K562 (cell line): ENCODE measurements at regions of chr15 and their contacts with region 1.

Region 1: GRCh38 chr15:68304589-68305337 is 27.2 kb downstream of the FEM1B start:
- DNase-seq: no peak
- ATAC-seq: peak; percentile 51
- H3K4me3 ChIP-seq: no peak overlapping the region
- H3K27ac ChIP-seq: no peak overlapping the region
- H3K4me1 ChIP-seq: peaks cover 0 to 6% of the 10 kb centered on the region in 2 experiments; a peak in 2 of 5 replicates
- H3K27me3 ChIP-seq: peaks cover 9 to 17% of the 10 kb centered on the region in 2 experiments; a peak in 4 of 5 replicates
- CTCF ChIP-seq: peak in 1 of 3 experiments; percentile 7; a peak in 1 of 6 replicates
- EP300 ChIP-seq: no peak
- POLR2A ChIP-seq: no peak
- RAD21 ChIP-seq: no peak

Region 2: DNA sequence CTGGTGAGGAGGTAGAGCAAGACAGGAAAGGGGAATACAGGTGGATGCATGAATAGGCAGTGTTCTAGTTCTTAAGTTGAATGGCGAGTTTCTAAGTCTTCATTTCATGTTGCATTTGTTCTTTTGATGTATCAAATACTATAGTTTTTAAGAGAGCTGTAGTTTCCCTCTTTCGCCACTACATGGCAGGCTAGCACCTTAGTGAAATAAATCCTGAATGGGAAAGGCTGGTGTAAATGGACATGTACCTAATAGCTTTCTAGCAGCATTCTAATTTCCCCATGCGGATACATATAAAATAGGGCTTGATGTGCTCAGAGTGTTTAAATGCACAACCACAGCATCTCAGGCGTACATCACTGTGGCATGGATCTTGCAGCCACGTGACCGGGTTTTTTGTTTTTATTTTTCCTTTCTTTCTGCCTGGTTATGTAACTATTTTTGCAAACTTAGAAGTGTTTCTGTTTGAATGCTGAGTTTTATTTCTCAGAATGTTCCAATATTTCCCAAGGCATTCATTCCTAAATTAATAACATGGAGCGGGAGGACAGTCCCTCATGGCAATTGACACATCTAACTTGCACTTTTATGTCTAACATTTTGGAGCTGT is 51.7 kb before region 1 on chr15:
- CTCF ChIA-PET with region 1: interaction called, 28 read pairs
- POLR2A ChIA-PET with region 1: no interaction called
- in situ Hi-C with region 1: loop called (anchors 5 kb)
- intact Hi-C with region 1: loop called (anchors 1 kb)
- DNase-seq: peak; percentile 43 to 77 (median 55)
- ATAC-seq: peak; percentile 90
- H3K4me3 ChIP-seq: no peak overlapping the region
- H3K27ac ChIP-seq: no peak overlapping the region
- H3K4me1 ChIP-seq: peaks cover 0 to 12% of the 10 kb centered on the region in 2 experiments; a peak in 3 of 5 replicates
- H3K27me3 ChIP-seq: peaks cover 12 to 19% of the 10 kb centered on the region in 2 experiments
- CTCF ChIP-seq: peak; percentile 74 to 93 (median 81)
- EP300 ChIP-seq: no peak
- POLR2A ChIP-seq: no peak
- RAD21 ChIP-seq: peak; percentile 73 to 87

Region 3: GRCh38 chr15:68383161-68384074 is 78.7 kb after region 1 on chr15:
- CTCF ChIA-PET with region 1: interaction called, 4 read pairs
- POLR2A ChIA-PET with region 1: no interaction called
- in situ Hi-C with region 1: no loop called
- intact Hi-C with region 1: loop called (anchors 1 kb)
- DNase-seq: peak; percentile 53 to 74 (median 66)
- ATAC-seq: peak; percentile 61; the same call in 1 of the 3 replicates
- H3K4me3 ChIP-seq: no peak overlapping the region
- H3K27ac ChIP-seq: no peak overlapping the region
- H3K4me1 ChIP-seq: no peaks in the 10 kb centered on the region
- H3K27me3 ChIP-seq: peaks cover 0 to 29% of the 10 kb centered on the region in 2 experiments; a peak in 3 of 5 replicates
- CTCF ChIP-seq: peak; percentile 60 to 70 (median 63)
- EP300 ChIP-seq: no peak
- POLR2A ChIP-seq: no peak
- RAD21 ChIP-seq: peak; percentile 36 to 64

Region 4: GRCh38 chr15:68536331-68537095 is 231.8 kb after region 1 on chr15:
- CTCF ChIA-PET with region 1: interaction called, 18 read pairs
- POLR2A ChIA-PET with region 1: no interaction called
- in situ Hi-C with region 1: no loop called
- intact Hi-C with region 1: loop called (anchors 1 kb)
- DNase-seq: no peak
- ATAC-seq: 0 out of 3 replicates have a peak, but pooled peaks have one; percentile 42
- H3K4me3 ChIP-seq: no peak overlapping the region
- H3K27ac ChIP-seq: no peak overlapping the region
- H3K4me1 ChIP-seq: no peaks in the 10 kb centered on the region
- H3K27me3 ChIP-seq: no peaks in the 10 kb centered on the region
- CTCF ChIP-seq: no peak
- EP300 ChIP-seq: peak; percentile 19; the same call in 1 of the 2 replicates
- POLR2A ChIP-seq: no peak
- RAD21 ChIP-seq: no peak

Region 5: DNA sequence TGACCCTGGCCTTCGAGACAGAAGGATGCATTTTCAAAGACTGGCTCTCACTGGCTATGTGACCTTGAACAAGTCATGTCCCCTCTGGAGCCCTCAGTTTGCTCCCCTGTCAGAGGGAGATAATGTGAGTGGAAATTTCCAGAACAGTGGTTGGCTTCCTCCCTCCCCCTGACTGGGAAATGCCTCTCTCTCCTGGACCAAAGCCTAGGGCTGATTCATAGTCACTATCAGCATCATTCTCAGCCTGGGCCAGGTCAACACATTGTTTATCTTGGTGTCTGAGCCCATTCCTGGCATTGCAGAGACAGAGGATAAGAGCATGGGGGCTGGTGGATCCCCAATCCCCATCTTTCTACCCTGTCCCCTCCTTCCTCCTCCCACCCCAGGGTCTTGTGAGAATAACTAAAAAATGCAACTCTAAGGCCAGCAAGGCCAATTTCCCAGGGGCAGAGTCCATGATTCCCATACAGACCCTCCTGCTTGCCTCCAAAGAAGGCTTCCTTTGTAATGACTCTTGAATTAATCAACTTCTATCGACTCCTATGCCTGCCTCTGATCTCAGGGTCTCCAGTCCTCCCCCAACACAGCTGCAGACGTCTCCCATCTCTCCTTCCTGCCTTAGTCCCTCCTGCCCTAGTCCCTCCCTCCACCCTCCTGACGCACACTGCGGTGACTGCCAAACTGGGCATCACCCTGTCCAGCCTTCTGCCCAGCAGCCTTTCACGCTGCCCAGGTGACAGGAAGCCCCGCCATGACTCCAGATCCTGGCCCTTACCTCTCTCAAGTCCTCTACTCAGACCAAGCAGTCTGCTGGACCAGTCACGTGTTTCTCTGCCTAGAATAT is 238.6 kb after region 1 on chr15:
- CTCF ChIA-PET with region 1: interaction called, 18 read pairs
- POLR2A ChIA-PET with region 1: no interaction called
- in situ Hi-C with region 1: no loop called
- intact Hi-C with region 1: loop called (anchors 1 kb)
- DNase-seq: no peak
- ATAC-seq: no peak
- H3K4me3 ChIP-seq: no peak overlapping the region
- H3K27ac ChIP-seq: no peak overlapping the region
- H3K4me1 ChIP-seq: no peaks in the 10 kb centered on the region
- H3K27me3 ChIP-seq: peaks cover 0 to 7% of the 10 kb centered on the region in 2 experiments; a peak in 1 of 5 replicates
- CTCF ChIP-seq: no peak
- EP300 ChIP-seq: no peak
- POLR2A ChIP-seq: no peak
- RAD21 ChIP-seq: no peak

Region 6: GRCh38 chr15:68672781-68673205 is 368.0 kb after region 1 on chr15:
- CTCF ChIA-PET with region 1: interaction called, 11 read pairs
- POLR2A ChIA-PET with region 1: no interaction called
- in situ Hi-C with region 1: no loop called
- intact Hi-C with region 1: loop called (anchors 2 kb)
- DNase-seq: no peak
- ATAC-seq: peak; percentile 27; the same call in 1 of the 3 replicates
- H3K4me3 ChIP-seq: no peak overlapping the region
- H3K27ac ChIP-seq: no peak overlapping the region
- H3K4me1 ChIP-seq: no peaks in the 10 kb centered on the region
- H3K27me3 ChIP-seq: peaks cover 3 to 27% of the 10 kb centered on the region in 2 experiments; a peak in 3 of 5 replicates
- CTCF ChIP-seq: peak in 1 of 3 experiments; percentile 14; a peak in 1 of 6 replicates
- EP300 ChIP-seq: no peak
- POLR2A ChIP-seq: no peak
- RAD21 ChIP-seq: peak in 1 of 2 experiments; percentile 19; a peak in 2 of 4 replicates

Region 7: GRCh38 chr15:68775671-68776476 is 471.1 kb after region 1 on chr15:
- CTCF ChIA-PET with region 1: no interaction called
- POLR2A ChIA-PET with region 1: no interaction called
- in situ Hi-C with region 1: no loop called
- intact Hi-C with region 1: no loop called
- DNase-seq: no peak
- ATAC-seq: no peak; the same call in 1 of the 3 replicates
- H3K4me3 ChIP-seq: no peak overlapping the region
- H3K27ac ChIP-seq: no peak overlapping the region
- H3K4me1 ChIP-seq: no peaks in the 10 kb centered on the region
- H3K27me3 ChIP-seq: peaks cover 0 to 3% of the 10 kb centered on the region in 2 experiments; a peak in 1 of 5 replicates
- CTCF ChIP-seq: no peak
- EP300 ChIP-seq: no peak
- POLR2A ChIP-seq: no peak
- RAD21 ChIP-seq: no peak